ENCODE measurements at regions of chr1 and their contacts with region 1.

Region 1: GRCh38 chr1:36285448-36286101 is 20.6 kb upstream of the SH3D21 start:
- DNase-seq: peak; percentile 33 to 94
- ATAC-seq: peak; percentile 93 to 98 (median 94)
- H3K4me3 ChIP-seq: no peak overlapping the region
- H3K4me3 Mint-ChIP-seq: no peak overlapping the region
- H3K27ac ChIP-seq: no peak overlapping the region
- H3K27ac Mint-ChIP-seq: peak overlapping the region; percentile 63 to 66
- H3K4me1 ChIP-seq: no peaks in the 10 kb centered on the region
- H3K4me1 Mint-ChIP-seq: peaks cover 7 to 22% of the 10 kb centered on the region in 2 donors
- H3K27me3 ChIP-seq: no peaks in the 10 kb centered on the region
- H3K27me3 Mint-ChIP-seq: no peaks in the 10 kb centered on the region
- CTCF ChIP-seq: peak; percentile 87

Region 2: GRCh38 chr1:36099681-36100341 is 185.8 kb before region 1 on chr1:
- intact Hi-C with region 1: loop called (anchors 1 kb)
- DNase-seq: peak; percentile 68 to 86
- ATAC-seq: peak; percentile 81 to 92 (median 89)
- H3K4me3 ChIP-seq: no peak overlapping the region
- H3K4me3 Mint-ChIP-seq: no peak overlapping the region
- H3K27ac ChIP-seq: no peak overlapping the region
- H3K27ac Mint-ChIP-seq: no peak overlapping the region
- H3K4me1 ChIP-seq: peaks cover 10% of the 10 kb centered on the region
- H3K4me1 Mint-ChIP-seq: peaks cover 0 to 5% of the 10 kb centered on the region in 2 donors
- H3K27me3 ChIP-seq: no peaks in the 10 kb centered on the region
- H3K27me3 Mint-ChIP-seq: no peaks in the 10 kb centered on the region
- CTCF ChIP-seq: peak; percentile 83

Region 3: GRCh38 chr1:36187800-36188593 is 97.6 kb before region 1 on chr1:
- intact Hi-C with region 1: loop called (anchors 1 kb)
- DNase-seq: peak; percentile 69 to 93
- ATAC-seq: peak; percentile 97 to 99 (median 98)
- H3K4me3 ChIP-seq: no peak overlapping the region
- H3K4me3 Mint-ChIP-seq: no peak overlapping the region
- H3K27ac ChIP-seq: no peak overlapping the region
- H3K27ac Mint-ChIP-seq: peak overlapping the region; percentile 47 to 89
- H3K4me1 ChIP-seq: peaks cover 9% of the 10 kb centered on the region
- H3K4me1 Mint-ChIP-seq: peaks cover 6 to 10% of the 10 kb centered on the region in 2 donors
- H3K27me3 ChIP-seq: no peaks in the 10 kb centered on the region
- H3K27me3 Mint-ChIP-seq: no peaks in the 10 kb centered on the region
- CTCF ChIP-seq: peak; percentile 77

Region 4: DNA sequence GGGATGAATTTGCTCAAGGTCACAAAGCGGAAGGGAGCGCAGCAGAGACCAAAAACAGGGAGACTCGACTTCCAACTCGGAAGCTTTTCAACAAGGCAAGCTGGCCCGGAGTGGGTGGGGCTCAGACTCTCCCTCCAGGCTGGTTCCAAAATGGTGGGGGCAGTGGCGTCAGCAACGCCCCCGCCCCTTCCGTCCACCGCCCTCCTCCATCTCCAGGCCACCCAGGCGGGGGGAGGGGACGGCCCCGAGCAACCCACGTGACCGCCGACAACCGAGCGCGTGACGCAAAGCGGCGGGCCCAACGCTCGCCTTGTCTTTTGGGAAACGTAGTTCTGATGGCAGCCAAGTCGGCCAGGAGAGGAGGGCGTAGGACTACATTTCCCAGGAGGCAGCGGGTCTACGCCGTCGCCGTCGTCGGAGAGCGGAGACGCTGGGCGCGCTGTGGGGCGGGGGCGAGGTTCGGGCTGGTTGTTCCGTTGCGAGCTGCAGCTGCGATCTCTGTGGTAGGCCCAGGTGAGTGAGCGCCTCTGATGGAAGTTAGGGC is 61.5 kb before region 1 on chr1 and contains the start of gene THRAP3:
- intact Hi-C with region 1: loop called (anchors 10 kb)
- DNase-seq: peak; percentile 99 to 100
- ATAC-seq: peak; percentile 83 to 94 (median 84)
- H3K4me3 ChIP-seq: peak within 1 kb of the TSS; percentile 78
- H3K4me3 Mint-ChIP-seq: peak within 1 kb of the TSS; percentile 98
- H3K27ac ChIP-seq: peak within 1 kb of the TSS; percentile 95
- H3K27ac Mint-ChIP-seq: peak within 1 kb of the TSS; percentile 99 to 100
- H3K4me1 ChIP-seq: peaks cover 25% of the 10 kb centered on the region
- H3K4me1 Mint-ChIP-seq: peaks cover 38 to 44% of the 10 kb centered on the region in 2 donors
- H3K27me3 ChIP-seq: no peaks in the 10 kb centered on the region
- H3K27me3 Mint-ChIP-seq: no peaks in the 10 kb centered on the region
- CTCF ChIP-seq: no peak
- total RNA-seq, gene THRAP3: 88.6 to 110 (median 97.4) TPM